CD4-positive, alpha-beta memory T cell (primary cell): ENCODE measurements at regions of chr17 and their contacts with region 1.

Region 1: GRCh38 chr17:7627250-7628121 is at the start of gene SAT2:
- DNase-seq: peak; percentile 73 to 88 (median 75)
- H3K4me3 ChIP-seq: peak within 1 kb of the TSS; percentile 76 to 82
- H3K4me3 Mint-ChIP-seq: peak within 1 kb of the TSS; percentile 91 to 95 (median 93)
- H3K27ac ChIP-seq: peak within 1 kb of the TSS; percentile 82
- H3K27ac Mint-ChIP-seq: peak within 1 kb of the TSS; percentile 75 to 96 (median 91)
- H3K4me1 ChIP-seq: peaks cover 13% of the 10 kb centered on the region
- H3K4me1 Mint-ChIP-seq: peaks cover 4 to 20% (median 14%) of the 10 kb centered on the region in 4 donors
- H3K27me3 ChIP-seq: no peaks in the 10 kb centered on the region
- H3K27me3 Mint-ChIP-seq: no peaks in the 10 kb centered on the region
- total RNA-seq, gene SAT2: 65.8 to 76.9 TPM

Region 2: GRCh38 chr17:6936370-6937028 is 691.0 kb before region 1 on chr17:
- CTCF ChIA-PET with region 1: no interaction called
- POLR2A ChIA-PET with region 1: no interaction called
- intact Hi-C with region 1: no loop called
- DNase-seq: peak in 3 of 5 donors; percentile 21 to 55 (median 22)
- H3K4me3 ChIP-seq: no peak overlapping the region
- H3K4me3 Mint-ChIP-seq: peak overlapping the region; percentile 57 to 79 (median 64)
- H3K27ac ChIP-seq: peak overlapping the region; percentile 62
- H3K27ac Mint-ChIP-seq: peak overlapping the region in 6 of 7 donors; percentile 78 to 88 (median 81)
- H3K4me1 ChIP-seq: no peaks in the 10 kb centered on the region
- H3K4me1 Mint-ChIP-seq: peaks cover 0 to 7% (median 2%) of the 10 kb centered on the region in 4 donors
- H3K27me3 ChIP-seq: no peaks in the 10 kb centered on the region
- H3K27me3 Mint-ChIP-seq: no peaks in the 10 kb centered on the region

Region 3: DNA sequence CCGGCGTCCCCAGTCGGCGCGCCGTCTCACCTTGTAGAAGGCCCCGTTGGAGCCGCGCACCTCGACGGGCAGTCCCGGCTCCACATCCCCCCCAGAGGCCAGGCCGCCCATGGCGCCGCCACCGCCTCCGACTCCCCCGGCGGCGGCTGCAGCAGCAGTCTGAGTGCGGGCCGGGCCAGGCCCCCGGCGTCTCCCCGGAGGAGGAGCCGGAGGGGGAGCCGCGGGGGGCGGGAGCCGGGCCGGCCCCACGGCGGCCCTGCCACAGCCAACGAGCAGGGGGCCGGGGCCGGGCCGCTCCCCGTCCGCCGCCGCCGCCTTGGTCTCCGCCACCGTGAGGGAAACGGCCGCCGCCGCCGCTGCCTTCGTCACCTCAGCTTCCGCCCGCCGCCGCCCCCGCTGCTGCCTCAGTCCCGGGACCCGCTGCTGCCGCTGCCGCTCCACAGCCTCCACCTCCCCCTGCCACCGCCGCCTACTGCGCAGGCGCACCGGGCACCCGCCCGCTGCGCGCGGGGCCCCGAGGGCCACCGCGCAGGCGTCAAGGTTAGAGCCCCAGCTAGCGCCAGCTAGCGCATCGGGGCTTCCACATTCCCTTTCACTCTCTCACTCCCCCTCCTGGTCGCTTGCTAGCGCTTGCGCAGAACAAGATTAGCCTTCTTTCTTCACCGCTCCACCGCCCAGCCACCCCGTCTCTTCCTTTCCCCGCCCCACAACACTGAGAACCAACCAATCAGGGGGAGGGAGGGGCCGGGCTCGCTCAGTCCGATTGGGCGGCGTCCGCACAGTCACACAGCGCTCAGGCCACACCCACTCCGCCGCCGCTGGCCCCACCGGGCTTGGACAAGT is 12.8 kb before region 1 on chr17 and contains the start of gene FXR2:
- CTCF ChIA-PET with region 1: interaction called, 12 read pairs
- POLR2A ChIA-PET with region 1: interaction called, 46 read pairs
- intact Hi-C with region 1: loop called (anchors 1 kb)
- DNase-seq: peak; percentile 98 to 100 (median 99)
- H3K4me3 ChIP-seq: peak within 1 kb of the TSS; percentile 74 to 78
- H3K4me3 Mint-ChIP-seq: peak within 1 kb of the TSS; percentile 87 to 95 (median 93)
- H3K27ac ChIP-seq: peak within 1 kb of the TSS; percentile 66
- H3K27ac Mint-ChIP-seq: peak within 1 kb of the TSS; percentile 83 to 98 (median 97)
- H3K4me1 ChIP-seq: peaks cover 42% of the 10 kb centered on the region
- H3K4me1 Mint-ChIP-seq: peaks cover 22 to 49% (median 36%) of the 10 kb centered on the region in 4 donors
- H3K27me3 ChIP-seq: no peaks in the 10 kb centered on the region
- H3K27me3 Mint-ChIP-seq: no peaks in the 10 kb centered on the region
- total RNA-seq, gene FXR2: 44.1 to 46.6 TPM

Region 4: DNA sequence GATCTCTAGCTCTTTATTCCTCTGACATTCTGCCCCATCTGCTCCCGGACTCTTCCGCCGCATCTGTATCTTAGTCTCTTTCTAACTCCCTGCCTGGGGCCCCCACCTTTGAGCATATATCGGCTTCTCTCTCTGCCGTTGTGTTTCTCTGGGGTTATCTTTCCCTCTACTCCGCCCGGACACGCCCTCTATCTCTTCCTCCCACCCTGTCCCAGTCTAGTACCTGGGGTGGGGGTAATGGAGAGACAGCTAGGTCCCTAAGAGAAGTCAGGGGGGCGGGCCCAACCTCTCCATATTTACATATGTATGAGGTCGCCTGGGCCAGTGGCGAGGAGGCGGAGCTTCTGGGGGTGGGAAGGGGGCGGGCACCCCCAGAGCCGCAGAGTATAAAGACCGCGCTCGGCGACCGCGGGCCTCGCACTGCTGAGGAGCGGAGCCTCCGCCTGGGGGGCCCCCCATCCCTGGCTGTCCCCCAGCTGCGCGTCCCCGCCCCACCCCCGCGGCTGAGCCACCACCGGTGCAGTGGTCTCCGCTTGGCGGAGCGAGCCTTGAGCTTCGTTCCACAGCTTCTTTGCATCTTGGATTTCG is 23.1 kb after region 1 on chr17 and contains the start of gene ATP1B2:
- CTCF ChIA-PET with region 1: interaction called, 5 read pairs
- POLR2A ChIA-PET with region 1: interaction called, 11 read pairs
- intact Hi-C with region 1: no loop called
- DNase-seq: peak; percentile 60 to 88 (median 63)
- H3K4me3 ChIP-seq: peak within 1 kb of the TSS; percentile 39 to 46
- H3K4me3 Mint-ChIP-seq: peak within 1 kb of the TSS; percentile 84 to 92 (median 90)
- H3K27ac ChIP-seq: no peak within 1 kb of the TSS
- H3K27ac Mint-ChIP-seq: peak within 1 kb of the TSS in 6 of 7 donors; percentile 45 to 92 (median 59)
- H3K4me1 ChIP-seq: peaks cover 20% of the 10 kb centered on the region
- H3K4me1 Mint-ChIP-seq: peaks cover 10 to 16% (median 13%) of the 10 kb centered on the region in 4 donors
- H3K27me3 ChIP-seq: peaks cover 13% of the 10 kb centered on the region
- H3K27me3 Mint-ChIP-seq: peaks cover 17 to 29% of the 10 kb centered on the region in 2 donors
- total RNA-seq, gene ATP1B2: 0.22 to 0.52 TPM

Region 5: DNA sequence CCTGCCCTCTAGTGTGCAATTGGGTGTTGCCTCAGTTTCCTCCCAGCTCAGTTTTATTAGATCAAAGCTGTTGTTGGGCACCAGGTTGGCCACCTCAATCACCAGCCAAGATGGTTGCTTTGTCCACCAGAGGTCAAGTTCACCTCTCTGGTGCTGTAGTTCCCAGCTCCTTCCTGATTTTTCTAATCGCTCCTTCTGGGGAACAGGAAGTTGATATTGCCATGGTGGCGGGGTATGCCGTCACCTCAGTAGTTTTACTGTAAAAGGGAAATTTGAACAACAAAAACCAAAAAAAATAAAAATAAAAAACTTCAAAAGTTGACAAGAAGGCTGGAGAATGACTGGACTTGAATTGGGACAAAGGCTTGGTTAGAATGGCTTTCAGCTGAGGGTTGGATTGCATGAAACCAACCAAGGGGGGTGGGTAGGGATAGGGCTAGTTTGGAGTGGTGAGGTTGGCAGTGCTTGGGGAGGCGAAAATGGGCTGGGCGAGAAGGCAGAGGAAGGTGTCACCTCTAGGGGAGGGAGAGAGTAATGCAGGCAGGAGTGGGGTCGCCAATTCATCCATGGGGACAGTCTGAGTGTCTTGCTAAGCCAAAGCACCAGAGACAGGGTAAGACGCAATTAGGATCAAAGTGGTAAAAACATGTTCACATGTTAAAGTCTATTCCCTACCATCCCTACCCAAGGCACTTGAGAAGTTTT is 83.7 kb after region 1 on chr17:
- CTCF ChIA-PET with region 1: no interaction called
- POLR2A ChIA-PET with region 1: no interaction called
- intact Hi-C with region 1: no loop called
- DNase-seq: no peak
- H3K4me3 ChIP-seq: no peak overlapping the region
- H3K4me3 Mint-ChIP-seq: no peak overlapping the region
- H3K27ac ChIP-seq: no peak overlapping the region
- H3K27ac Mint-ChIP-seq: no peak overlapping the region
- H3K4me1 ChIP-seq: peaks cover 6% of the 10 kb centered on the region
- H3K4me1 Mint-ChIP-seq: peaks cover 9 to 20% (median 15%) of the 10 kb centered on the region in 4 donors
- H3K27me3 ChIP-seq: peaks cover 27% of the 10 kb centered on the region
- H3K27me3 Mint-ChIP-seq: peaks cover 55 to 69% of the 10 kb centered on the region in 2 donors